ENCODE measurements at regions of chr14 and their contacts with region 1.

Region 1: GRCh38 chr14:96275177-96276112 is 19.4 kb downstream of the BDKRB1 start:
- DNase-seq: peak in 1 of 2 donors; percentile 87
- H3K4me3 ChIP-seq: no peak overlapping the region
- H3K27ac ChIP-seq: peak overlapping the region; percentile 68
- H3K4me1 ChIP-seq: peaks cover 42% of the 10 kb centered on the region
- H3K27me3 ChIP-seq: no peaks in the 10 kb centered on the region
- CTCF ChIP-seq: peak; percentile 88 to 98 (median 92)
- POLR2A ChIP-seq: no peak

Region 2: DNA sequence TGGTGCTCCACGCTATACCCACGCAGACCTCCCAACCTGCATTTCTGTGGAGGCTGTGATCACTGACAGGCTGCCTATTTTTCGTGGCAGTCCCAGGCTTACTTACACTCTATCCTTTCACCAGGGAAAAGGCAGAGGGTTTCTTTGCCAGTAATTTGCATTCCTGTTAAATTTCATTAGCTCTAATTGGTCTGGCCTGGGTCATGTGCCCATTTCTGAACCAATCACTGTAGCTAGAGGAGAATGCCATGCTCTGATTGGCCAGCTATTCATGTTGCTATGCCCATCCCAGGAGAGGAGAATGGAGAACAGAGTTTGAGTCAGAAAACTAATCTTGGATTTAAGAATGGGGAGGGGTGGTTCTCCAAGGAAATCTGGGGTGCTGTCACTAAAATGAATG is 442.0 kb before region 1 on chr14:
- intact Hi-C with region 1: no loop called
- DNase-seq: no peak
- H3K4me3 ChIP-seq: no peak overlapping the region
- H3K27ac ChIP-seq: no peak overlapping the region
- H3K4me1 ChIP-seq: no peaks in the 10 kb centered on the region
- H3K27me3 ChIP-seq: no peaks in the 10 kb centered on the region
- CTCF ChIP-seq: no peak
- POLR2A ChIP-seq: no peak

Region 3: GRCh38 chr14:96001866-96002497 is 273.5 kb before region 1 on chr14:
- intact Hi-C with region 1: loop called (anchors 10 kb)
- DNase-seq: no peak
- H3K4me3 ChIP-seq: no peak overlapping the region
- H3K27ac ChIP-seq: no peak overlapping the region
- H3K4me1 ChIP-seq: no peaks in the 10 kb centered on the region
- H3K27me3 ChIP-seq: no peaks in the 10 kb centered on the region
- CTCF ChIP-seq: no peak
- POLR2A ChIP-seq: no peak

Region 4: DNA sequence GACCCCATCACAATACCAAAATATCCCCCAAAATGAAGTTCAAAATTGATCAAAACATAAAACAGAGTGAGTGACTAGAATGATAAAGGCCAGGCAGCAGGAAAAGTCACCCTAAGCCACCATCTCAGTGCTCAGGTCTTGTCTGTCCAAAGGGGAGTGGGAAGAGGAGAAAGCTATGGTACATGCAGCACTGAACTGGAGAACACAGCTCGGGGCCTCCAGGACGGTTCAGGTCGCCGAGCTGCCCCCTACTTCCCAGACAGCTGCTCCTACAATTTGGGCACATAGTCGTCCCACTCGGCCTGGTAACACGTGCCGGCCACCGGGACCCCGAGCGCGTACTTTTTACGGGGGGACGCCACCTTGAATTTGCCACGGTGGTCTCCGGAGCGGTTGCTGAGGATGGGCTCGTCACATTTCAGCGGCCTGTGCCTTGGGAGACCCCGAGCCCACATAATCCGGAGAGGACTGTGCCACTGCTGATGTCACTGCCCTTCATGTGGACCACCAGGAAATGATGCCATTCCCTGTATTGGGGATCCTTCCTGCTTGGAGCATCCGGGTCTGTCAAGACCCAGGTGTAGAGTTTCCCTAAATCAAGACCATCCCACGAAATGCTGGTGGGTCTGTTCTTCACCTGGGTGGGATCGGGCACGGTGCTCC is 148.1 kb after region 1 on chr14:
- intact Hi-C with region 1: no loop called
- DNase-seq: no peak
- H3K4me3 ChIP-seq: peak overlapping the region; percentile 36 to 45
- H3K27ac ChIP-seq: no peak overlapping the region
- H3K4me1 ChIP-seq: peaks cover 6% of the 10 kb centered on the region
- H3K27me3 ChIP-seq: no peaks in the 10 kb centered on the region
- CTCF ChIP-seq: no peak
- POLR2A ChIP-seq: no peak